Right cardiac atrium (tissue), 5 donors: ENCODE measurements at regions of chr16 and their contacts with region 1.

Region 1: DNA sequence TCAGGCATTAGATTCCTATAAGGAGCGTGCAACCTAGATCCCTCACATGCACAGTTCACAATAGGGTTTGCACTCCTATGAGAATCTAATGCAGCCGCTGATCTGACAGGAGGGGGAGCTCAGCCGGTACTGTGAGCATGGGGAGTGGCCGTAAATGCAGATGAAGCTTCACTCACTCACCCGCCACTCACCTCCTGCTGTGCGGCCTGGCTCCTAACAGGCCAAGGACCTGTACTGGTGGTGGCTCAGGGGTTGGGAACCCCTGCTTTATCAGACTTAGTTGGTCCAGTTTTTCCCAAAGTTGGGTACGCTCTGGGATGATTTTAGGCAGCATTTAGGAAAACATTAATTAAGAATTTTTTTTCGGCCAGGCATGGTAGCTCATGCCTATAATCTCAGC is 103.8 kb downstream of the MARF1 start:
- DNase-seq: no peak
- ATAC-seq: no peak
- H3K4me3 ChIP-seq: no peak overlapping the region
- H3K27ac ChIP-seq: no peak overlapping the region
- H3K4me1 ChIP-seq: no peaks in the 10 kb centered on the region
- H3K27me3 ChIP-seq: no peaks in the 10 kb centered on the region

Region 2: DNA sequence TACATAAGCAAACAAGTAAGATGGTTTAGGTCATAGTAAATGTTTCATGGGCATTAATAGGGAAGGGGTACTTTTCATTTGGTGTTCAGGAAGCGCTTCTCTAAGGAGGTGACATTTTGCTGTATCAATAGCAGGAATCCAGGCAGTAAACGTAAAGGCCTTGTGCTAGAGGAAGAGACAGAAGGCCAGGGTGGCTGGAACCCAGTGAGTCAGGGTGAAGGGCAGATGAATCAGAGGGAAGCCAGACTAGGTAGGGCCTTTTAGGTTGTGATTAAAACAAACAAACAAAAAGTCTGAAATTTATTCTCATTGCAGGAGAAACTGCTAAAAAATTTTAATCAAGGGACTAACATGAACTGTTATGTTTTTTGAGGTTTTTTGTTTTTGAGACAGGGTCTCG is 98.3 kb before region 1 on chr16:
- intact Hi-C with region 1: loop called in 1 of 4 experiments (anchors 10 kb)
- DNase-seq: no peak
- ATAC-seq: no peak
- H3K4me3 ChIP-seq: no peak overlapping the region
- H3K27ac ChIP-seq: no peak overlapping the region
- H3K4me1 ChIP-seq: no peaks in the 10 kb centered on the region
- H3K27me3 ChIP-seq: no peaks in the 10 kb centered on the region

Region 3: DNA sequence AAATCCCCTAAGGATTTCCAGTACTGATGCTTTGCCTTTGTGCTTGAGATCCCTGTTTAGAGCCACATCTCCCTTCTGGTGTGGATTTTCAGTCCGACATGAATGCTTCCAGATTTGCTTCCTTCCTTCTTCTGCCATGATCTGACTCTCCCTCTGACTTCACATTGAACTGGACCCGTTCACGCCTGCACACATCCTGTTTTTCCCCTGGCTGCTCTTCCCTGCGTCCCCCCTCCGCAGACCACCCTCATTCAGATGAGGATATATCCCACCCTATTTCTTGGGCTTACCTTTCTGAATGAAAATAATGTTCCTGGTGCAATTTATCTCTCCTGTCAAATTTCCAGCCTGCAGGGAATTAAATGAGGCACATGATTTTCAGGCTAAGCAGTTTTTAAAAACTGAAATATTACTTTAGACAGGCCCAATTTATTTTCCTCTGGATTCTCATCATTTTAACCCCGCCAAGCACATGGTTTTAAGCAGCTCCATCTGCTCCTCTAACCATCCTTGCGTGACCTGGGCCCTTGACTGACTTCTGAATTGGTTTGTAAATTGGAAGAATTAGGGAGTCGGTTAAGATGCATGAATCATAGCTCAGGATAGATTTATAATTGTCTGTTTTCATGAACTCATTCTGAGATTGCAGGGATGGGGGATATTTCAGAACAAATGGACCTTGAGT is 45.6 kb before region 1 on chr16:
- intact Hi-C with region 1: no loop called
- DNase-seq: no peak
- ATAC-seq: peak in 1 of 2 donors; percentile 4
- H3K4me3 ChIP-seq: no peak overlapping the region
- H3K27ac ChIP-seq: no peak overlapping the region
- H3K4me1 ChIP-seq: peaks cover 6% of the 10 kb centered on the region
- H3K27me3 ChIP-seq: no peaks in the 10 kb centered on the region

Region 4: GRCh38 chr16:15807603-15808009 is 268.4 kb after region 1 on chr16:
- intact Hi-C with region 1: no loop called
- DNase-seq: peak; percentile 57 to 65 (median 59)
- ATAC-seq: peak; percentile 47 to 68
- H3K4me3 ChIP-seq: no peak overlapping the region
- H3K27ac ChIP-seq: no peak overlapping the region
- H3K4me1 ChIP-seq: peaks cover 6% of the 10 kb centered on the region
- H3K27me3 ChIP-seq: no peaks in the 10 kb centered on the region